CD8-positive, alpha-beta T cell (primary cell): ENCODE measurements at regions of chr11 and their contacts with region 1.

Region 1: GRCh38 chr11:65540297-65541092 is 15.6 kb downstream of the SCYL1 start:
- DNase-seq: peak; percentile 78 to 93 (median 88)
- ATAC-seq: peak; percentile 85
- H3K4me3 ChIP-seq: peak overlapping the region; percentile 77 to 80
- H3K4me3 Mint-ChIP-seq: peak overlapping the region; percentile 86
- H3K27ac ChIP-seq: peak overlapping the region; percentile 53 to 60
- H3K27ac Mint-ChIP-seq: peak overlapping the region; percentile 71
- H3K4me1 ChIP-seq: peaks cover 15% of the 10 kb centered on the region
- H3K4me1 Mint-ChIP-seq: peaks cover 19% of the 10 kb centered on the region
- H3K27me3 ChIP-seq: no peaks in the 10 kb centered on the region
- H3K27me3 Mint-ChIP-seq: no peaks in the 10 kb centered on the region
- CTCF ChIP-seq: peak; percentile 62

Region 2: DNA sequence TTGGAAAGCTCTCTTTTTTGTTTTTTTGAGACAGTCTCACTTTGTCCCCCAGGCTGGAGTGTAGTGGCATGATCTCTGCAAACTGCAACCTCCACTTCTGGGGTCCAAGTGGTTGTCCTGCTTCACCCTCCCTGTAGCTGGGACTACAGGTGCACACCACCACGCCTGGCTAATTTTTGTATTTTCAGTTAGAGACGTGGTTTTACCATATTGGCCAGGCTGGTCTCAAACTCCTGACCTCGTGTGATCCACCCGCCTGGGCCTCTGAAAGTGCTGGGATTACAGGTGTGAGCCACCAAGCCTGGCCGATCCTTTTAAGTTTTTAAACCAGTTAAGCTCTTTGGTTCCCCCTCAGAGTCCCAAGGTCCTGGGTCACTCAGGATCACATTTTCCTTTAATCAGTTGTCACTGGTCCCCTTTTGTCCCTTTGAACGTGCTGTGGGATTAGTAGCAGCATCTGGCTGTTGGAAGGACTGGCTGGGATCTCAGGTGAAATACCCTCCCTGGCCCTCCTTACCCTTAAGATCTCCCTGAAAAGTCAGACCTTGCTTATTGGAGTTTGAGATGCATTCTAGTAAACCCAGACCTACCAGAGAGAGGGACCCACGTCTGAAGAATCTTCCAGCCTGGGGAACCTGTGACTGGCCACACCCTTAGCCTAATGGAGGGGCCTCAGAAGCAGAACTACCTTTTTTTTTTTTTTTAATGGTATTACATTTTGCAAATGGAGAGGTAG is 33.6 kb before region 1 on chr11:
- CTCF ChIA-PET with region 1: interaction called, 7 read pairs
- POLR2A ChIA-PET with region 1: interaction called, 13 read pairs
- intact Hi-C with region 1: no loop called
- DNase-seq: peak in 6 of 9 experiments; percentile 32 to 74 (median 62)
- ATAC-seq: peak; percentile 37
- H3K4me3 ChIP-seq: peak overlapping the region in 1 of 2 experiments; percentile 72
- H3K4me3 Mint-ChIP-seq: no peak overlapping the region
- H3K27ac ChIP-seq: peak overlapping the region; percentile 34 to 67
- H3K27ac Mint-ChIP-seq: peak overlapping the region; percentile 89
- H3K4me1 ChIP-seq: peaks cover 41% of the 10 kb centered on the region
- H3K4me1 Mint-ChIP-seq: peaks cover 51% of the 10 kb centered on the region
- H3K27me3 ChIP-seq: no peaks in the 10 kb centered on the region
- H3K27me3 Mint-ChIP-seq: no peaks in the 10 kb centered on the region
- CTCF ChIP-seq: no peak

Region 3: DNA sequence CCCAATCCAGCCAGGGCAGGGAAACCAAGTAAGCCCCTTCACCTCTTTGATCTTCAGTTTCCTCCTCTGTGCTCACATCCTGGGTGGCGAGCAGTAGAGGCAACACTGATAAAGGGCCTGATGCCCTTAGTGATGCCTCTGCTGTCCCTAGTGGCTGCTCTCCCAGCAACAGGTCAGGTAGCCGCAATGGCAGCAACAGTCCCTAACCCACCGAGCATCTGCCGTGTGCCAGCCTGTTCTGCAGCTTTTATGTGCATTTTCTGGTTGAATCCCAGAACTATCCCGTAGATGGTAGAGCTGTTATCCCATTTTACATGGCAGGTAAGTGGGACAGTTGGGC is 10.4 kb before region 1 on chr11:
- CTCF ChIA-PET with region 1: interaction called, 27 read pairs
- POLR2A ChIA-PET with region 1: interaction called, 17 read pairs
- intact Hi-C with region 1: loop called in 1 of 2 experiments (anchors 1 kb)
- DNase-seq: peak in 3 of 9 experiments; percentile 48 to 70 (median 61)
- ATAC-seq: peak; percentile 85
- H3K4me3 ChIP-seq: no peak overlapping the region
- H3K4me3 Mint-ChIP-seq: no peak overlapping the region
- H3K27ac ChIP-seq: no peak overlapping the region
- H3K27ac Mint-ChIP-seq: peak overlapping the region; percentile 33
- H3K4me1 ChIP-seq: peaks cover 35% of the 10 kb centered on the region
- H3K4me1 Mint-ChIP-seq: peaks cover 31% of the 10 kb centered on the region
- H3K27me3 ChIP-seq: no peaks in the 10 kb centered on the region
- H3K27me3 Mint-ChIP-seq: no peaks in the 10 kb centered on the region
- CTCF ChIP-seq: peak; percentile 42

Region 4: DNA sequence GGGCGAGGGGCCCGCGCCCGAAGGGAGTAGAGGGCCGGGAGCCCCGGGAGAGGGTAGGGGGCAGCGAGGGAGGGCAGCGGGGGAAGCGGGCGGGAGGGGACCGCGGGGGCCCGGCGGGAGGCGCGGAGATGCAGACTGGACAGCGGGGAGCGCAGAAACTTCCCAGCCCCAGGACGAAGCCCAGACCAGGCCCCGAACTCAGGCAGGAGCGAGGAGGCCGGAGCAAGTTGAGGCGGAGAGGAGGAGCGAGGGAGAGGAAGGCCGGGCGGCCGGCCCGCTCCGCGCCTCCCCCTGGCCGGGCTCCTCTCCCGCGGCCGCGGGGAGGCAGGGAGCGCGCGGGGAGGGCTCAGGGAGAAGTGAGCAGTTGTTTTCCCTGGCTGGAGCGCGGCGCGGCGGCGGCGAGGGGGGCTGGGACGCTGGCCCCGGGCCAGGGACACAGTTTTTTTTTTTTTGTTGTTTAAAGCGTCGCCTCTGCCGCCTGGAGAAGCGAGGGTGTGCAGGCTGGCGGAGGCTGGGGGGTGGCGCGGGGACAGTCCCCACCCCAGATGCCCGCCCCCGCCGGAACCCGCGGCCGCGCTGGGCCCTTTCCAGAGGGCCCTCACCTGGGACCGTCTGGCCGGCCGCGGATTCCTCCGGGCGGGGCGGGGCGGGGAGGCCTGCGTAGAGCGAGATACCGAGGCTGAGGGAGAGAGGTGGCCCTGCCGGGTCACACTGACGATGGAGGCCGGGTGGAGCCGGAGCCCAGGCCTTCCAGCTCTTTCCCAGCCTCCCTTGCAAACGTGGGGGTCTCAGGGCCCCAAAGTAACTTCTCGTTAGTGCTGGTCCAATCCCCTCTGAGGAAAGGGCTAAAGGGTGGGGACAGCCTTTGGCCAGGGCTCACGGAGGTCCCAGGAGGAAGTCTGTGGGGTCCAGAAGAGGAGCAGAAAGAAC is 17.8 kb after region 1 on chr11 and contains the start of gene LTBP3:
- CTCF ChIA-PET with region 1: interaction called, 55 read pairs
- POLR2A ChIA-PET with region 1: interaction called, 23 read pairs
- intact Hi-C with region 1: no loop called
- DNase-seq: peak in 5 of 9 experiments; percentile 29 to 70 (median 66)
- ATAC-seq: peak; percentile 38
- H3K4me3 ChIP-seq: peak within 1 kb of the TSS; percentile 54 to 61
- H3K4me3 Mint-ChIP-seq: peak within 1 kb of the TSS; percentile 89
- H3K27ac ChIP-seq: peak within 1 kb of the TSS; percentile 60 to 79
- H3K27ac Mint-ChIP-seq: peak within 1 kb of the TSS; percentile 89
- H3K4me1 ChIP-seq: peaks cover 61% of the 10 kb centered on the region
- H3K4me1 Mint-ChIP-seq: peaks cover 56% of the 10 kb centered on the region
- H3K27me3 ChIP-seq: no peaks in the 10 kb centered on the region
- H3K27me3 Mint-ChIP-seq: no peaks in the 10 kb centered on the region
- CTCF ChIP-seq: no peak
- total RNA-seq, gene LTBP3: 231 to 246 TPM

Region 5: DNA sequence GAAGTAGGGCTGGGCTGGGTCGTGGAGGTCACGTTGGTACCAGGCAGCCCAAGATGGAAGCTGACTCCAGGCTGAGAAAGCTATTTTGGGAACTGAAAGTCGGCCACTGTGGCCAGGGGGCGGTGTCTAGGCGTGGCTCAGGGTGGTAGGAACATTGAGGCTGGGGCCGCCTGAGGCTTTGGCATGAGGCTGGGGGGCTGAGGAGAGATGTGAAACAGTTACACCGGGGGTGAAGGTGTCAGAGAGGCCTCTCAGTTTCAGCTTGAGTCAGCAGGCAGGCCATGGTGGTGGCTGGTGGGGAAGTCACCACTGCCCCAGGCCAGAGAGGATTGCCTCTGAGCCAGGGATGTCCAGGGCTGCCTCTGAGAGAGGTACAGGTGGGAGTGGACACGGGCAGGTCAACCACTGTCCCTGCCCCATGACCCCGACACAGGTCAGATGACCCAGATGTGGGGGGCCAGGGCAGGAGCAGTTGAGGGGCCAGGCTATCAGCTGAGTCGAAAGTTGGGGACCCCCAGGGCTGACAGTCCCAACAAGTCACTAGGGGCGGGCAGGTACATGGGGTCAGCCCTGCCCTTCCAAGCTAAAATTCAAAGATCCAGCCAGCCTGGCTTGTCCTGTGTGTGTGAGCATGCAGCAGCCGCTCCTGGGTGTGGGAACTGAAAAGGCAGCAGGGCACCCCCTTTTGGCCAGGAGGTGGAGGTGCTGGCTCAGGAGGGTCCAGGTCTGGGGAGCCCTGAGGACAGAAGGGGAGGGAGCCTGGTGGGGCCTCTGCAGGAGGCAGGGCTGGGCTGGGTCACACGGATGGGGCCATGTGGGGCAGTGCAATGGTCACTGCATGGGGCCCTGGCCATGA is 47.9 kb after region 1 on chr11:
- CTCF ChIA-PET with region 1: interaction called, 139 read pairs
- POLR2A ChIA-PET with region 1: interaction called, 30 read pairs
- intact Hi-C with region 1: loop called (anchors 1 kb)
- DNase-seq: peak; percentile 55 to 88 (median 77)
- ATAC-seq: peak; percentile 95
- H3K4me3 ChIP-seq: no peak overlapping the region
- H3K4me3 Mint-ChIP-seq: no peak overlapping the region
- H3K27ac ChIP-seq: peak overlapping the region in 1 of 2 experiments; percentile 61
- H3K27ac Mint-ChIP-seq: peak overlapping the region; percentile 80
- H3K4me1 ChIP-seq: peaks cover 13% of the 10 kb centered on the region
- H3K4me1 Mint-ChIP-seq: peaks cover 21% of the 10 kb centered on the region
- H3K27me3 ChIP-seq: no peaks in the 10 kb centered on the region
- H3K27me3 Mint-ChIP-seq: no peaks in the 10 kb centered on the region
- CTCF ChIP-seq: peak; percentile 77

Region 6: GRCh38 chr11:65652511-65653231 is 112.2 kb after region 1 on chr11:
- CTCF ChIA-PET with region 1: no interaction called
- POLR2A ChIA-PET with region 1: interaction called, 4 read pairs
- intact Hi-C with region 1: loop called in 1 of 2 experiments (anchors 5 kb)
- DNase-seq: peak; percentile 93 to 99 (median 97)
- ATAC-seq: peak; percentile 80
- H3K4me3 ChIP-seq: peak overlapping the region; percentile 69 to 83
- H3K4me3 Mint-ChIP-seq: peak overlapping the region; percentile 86
- H3K27ac ChIP-seq: peak overlapping the region; percentile 94 to 100
- H3K27ac Mint-ChIP-seq: peak overlapping the region; percentile 98
- H3K4me1 ChIP-seq: peaks cover 27% of the 10 kb centered on the region
- H3K4me1 Mint-ChIP-seq: peaks cover 45% of the 10 kb centered on the region
- H3K27me3 ChIP-seq: no peaks in the 10 kb centered on the region
- H3K27me3 Mint-ChIP-seq: no peaks in the 10 kb centered on the region
- CTCF ChIP-seq: no peak